Dorsolateral prefrontal cortex (tissue), 120 donors: ENCODE measurements at regions of chr17 and their contacts with region 1.

Region 1: DNA sequence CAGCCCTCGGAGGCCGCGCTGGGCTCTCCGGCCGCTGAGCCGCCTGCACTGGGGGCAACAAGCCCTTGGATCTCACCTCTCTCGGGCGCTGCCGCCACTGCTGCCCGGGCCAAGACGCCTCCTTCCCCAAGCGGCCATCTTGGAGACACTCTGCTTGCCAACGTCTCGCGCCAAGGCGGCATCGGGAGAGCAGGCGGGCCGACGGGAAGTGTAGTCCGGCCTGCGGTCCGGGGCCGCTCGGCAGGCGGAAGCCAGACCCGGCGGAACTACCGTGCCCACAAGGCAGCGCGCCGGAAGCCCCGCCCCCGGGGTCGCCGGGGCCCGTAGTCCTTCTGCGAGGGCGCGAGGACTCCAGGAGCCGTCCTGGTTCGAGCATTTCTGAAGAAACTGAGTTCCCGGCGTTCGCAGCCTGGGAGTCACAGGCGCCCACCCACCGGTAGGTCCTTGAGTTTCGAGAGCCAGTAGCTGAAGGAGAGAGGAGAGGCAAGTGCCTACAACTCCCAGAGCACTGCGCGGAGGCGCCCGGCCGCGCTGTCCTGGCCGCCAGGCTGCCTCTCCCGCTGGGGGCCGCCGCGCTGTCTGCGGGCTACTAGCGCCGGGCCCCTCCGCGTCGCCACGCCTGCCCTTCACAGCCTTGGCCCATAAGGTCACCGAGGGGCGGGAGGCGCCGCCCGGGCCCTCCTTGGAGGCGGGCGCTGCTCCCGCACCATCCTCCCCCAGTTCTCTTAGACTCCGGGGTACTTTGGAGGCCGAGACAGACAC is at the start of gene TMEM11:
- DNase-seq: peak; percentile 87 to 98 (median 96)
- H3K4me3 ChIP-seq: peak within 1 kb of the TSS; percentile 72 to 100 (median 98)
- H3K27ac ChIP-seq: peak within 1 kb of the TSS; percentile 59 to 98 (median 92)
- H3K27me3 ChIP-seq: no peaks in the 10 kb centered on the region
- CTCF ChIP-seq: peak in 43 of 56 donors; percentile 1 to 64 (median 32)
- total RNA-seq, gene TMEM11: 11.9 to 23.7 (median 17.4) TPM

Region 2: GRCh38 chr17:21126645-21127510 is 87.3 kb before region 1 on chr17 and contains the start of gene DHRS7B:
- intact Hi-C with region 1: loop called (anchors 5 kb)
- DNase-seq: peak; percentile 92 to 98 (median 96)
- H3K4me3 ChIP-seq: peak within 1 kb of the TSS; percentile 64 to 100 (median 90)
- H3K27ac ChIP-seq: peak within 1 kb of the TSS in 58 of 59 donors; percentile 15 to 94 (median 74)
- H3K27me3 ChIP-seq: no peaks in the 10 kb centered on the region
- CTCF ChIP-seq: peak in 21 of 56 donors; percentile 10 to 48 (median 21)
- total RNA-seq, gene DHRS7B: 13.4 to 31.5 (median 21.3) TPM

Region 3: DNA sequence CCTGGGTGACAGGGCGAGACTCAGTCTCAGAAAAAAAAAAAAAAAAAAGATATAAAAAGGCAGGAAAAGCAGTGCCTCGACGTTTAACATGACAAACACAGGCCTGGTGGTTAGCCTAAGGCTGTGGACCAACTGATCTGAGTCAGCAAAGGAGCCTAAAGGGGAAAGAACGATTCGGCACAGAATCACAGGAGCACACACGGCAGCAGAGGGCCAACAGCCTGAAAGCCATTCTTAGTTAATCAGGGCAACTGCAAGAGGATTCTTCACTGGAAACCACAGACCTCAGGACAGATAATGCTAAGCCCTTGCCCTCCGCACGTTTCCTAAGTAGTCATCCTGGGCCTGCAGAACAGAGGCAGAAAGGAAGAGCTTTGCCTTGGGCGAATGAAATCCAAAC is 14.9 kb before region 1 on chr17:
- intact Hi-C with region 1: no loop called
- DNase-seq: no peak
- H3K4me3 ChIP-seq: no peak overlapping the region
- H3K27ac ChIP-seq: peak overlapping the region in 4 of 59 donors; percentile 10 to 46 (median 28)
- H3K27me3 ChIP-seq: no peaks in the 10 kb centered on the region
- CTCF ChIP-seq: no peak

Region 4: GRCh38 chr17:21252796-21253645 is 38.8 kb after region 1 on chr17 and contains the start of gene NATD1:
- intact Hi-C with region 1: loop called (anchors 2 to 5 kb)
- DNase-seq: peak; percentile 78 to 92 (median 87)
- H3K4me3 ChIP-seq: peak within 1 kb of the TSS; percentile 50 to 85 (median 67)
- H3K27ac ChIP-seq: peak within 1 kb of the TSS in 54 of 59 donors; percentile 9 to 92 (median 76)
- H3K27me3 ChIP-seq: no peaks in the 10 kb centered on the region
- CTCF ChIP-seq: peak in 20 of 56 donors; percentile 7 to 56 (median 27)
- total RNA-seq, gene NATD1: 5.2 to 13.5 (median 7.6) TPM

Region 5: DNA sequence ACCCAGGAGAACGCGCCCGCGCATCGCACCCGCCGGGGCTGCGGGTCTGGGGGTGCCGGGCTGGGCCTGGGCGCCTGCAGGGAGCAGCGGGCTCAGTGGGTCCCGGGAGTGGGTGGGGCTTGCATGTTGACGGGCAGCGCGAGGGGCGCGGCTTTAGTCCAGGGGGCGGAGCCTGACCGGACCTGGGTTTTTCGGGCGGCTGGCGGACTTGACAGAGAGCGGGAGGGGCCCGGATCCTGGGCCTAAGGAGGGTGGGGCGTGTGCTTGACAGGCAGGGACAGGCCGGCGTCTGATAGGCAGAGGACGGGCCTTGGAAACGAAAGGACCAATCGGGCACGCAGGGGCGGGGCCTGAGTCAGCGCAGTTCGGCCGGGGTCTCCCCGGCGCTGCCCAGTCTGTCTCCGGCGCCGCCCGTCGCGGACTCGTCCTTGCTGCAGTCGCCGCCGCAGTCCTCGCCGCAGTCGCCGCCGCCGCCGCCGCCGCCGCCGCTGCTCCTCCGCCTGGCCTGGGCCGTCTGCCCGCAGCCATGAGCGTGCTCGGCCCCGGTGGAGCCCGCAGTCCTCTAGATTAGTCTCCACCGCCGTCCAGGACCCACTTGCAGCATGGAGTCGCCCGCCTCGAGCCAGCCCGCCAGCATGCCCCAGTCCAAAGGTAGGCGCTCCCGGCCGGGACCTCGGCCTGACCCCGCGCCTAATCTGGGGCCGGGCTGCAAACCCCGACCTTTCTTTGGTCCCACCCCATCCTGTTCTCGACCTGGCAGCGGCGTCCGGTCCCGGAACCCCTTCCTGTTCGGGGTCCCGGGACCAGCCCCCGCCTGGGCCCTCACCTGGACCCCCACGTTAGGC is 70.3 kb after region 1 on chr17 and contains the start of gene MAP2K3:
- intact Hi-C with region 1: loop called (anchors 5 to 10 kb)
- DNase-seq: peak; percentile 97 to 100 (median 100)
- H3K4me3 ChIP-seq: peak within 1 kb of the TSS; percentile 55 to 99 (median 91)
- H3K27ac ChIP-seq: peak within 1 kb of the TSS in 57 of 59 donors; percentile 11 to 94 (median 83)
- H3K27me3 ChIP-seq: no peaks in the 10 kb centered on the region
- CTCF ChIP-seq: peak in 16 of 56 donors; percentile 7 to 45 (median 30)
- total RNA-seq, gene MAP2K3: 9.6 to 38.2 (median 18.5) TPM

Region 6: GRCh38 chr17:21457051-21458026 is 243.1 kb after region 1 on chr17:
- intact Hi-C with region 1: loop called in 1 of 2 experiments (anchors 10 kb)
- DNase-seq: peak; percentile 71 to 88 (median 80)
- H3K4me3 ChIP-seq: peak overlapping the region in 5 of 59 donors; percentile 1 to 12 (median 6)
- H3K27ac ChIP-seq: no peak overlapping the region
- H3K27me3 ChIP-seq: no peaks in the 10 kb centered on the region
- CTCF ChIP-seq: peak; percentile 67 to 97 (median 90)

Region 7: GRCh38 chr17:21551081-21551881 is 337.1 kb after region 1 on chr17:
- intact Hi-C with region 1: loop called in 1 of 2 experiments (anchors 10 kb)
- DNase-seq: peak; percentile 75 to 92 (median 84)
- H3K4me3 ChIP-seq: peak overlapping the region; percentile 61 to 92 (median 80)
- H3K27ac ChIP-seq: peak overlapping the region in 55 of 59 donors; percentile 19 to 91 (median 78)
- H3K27me3 ChIP-seq: no peaks in the 10 kb centered on the region
- CTCF ChIP-seq: peak in 7 of 56 donors; percentile 3 to 30 (median 12)